Heart left ventricle (tissue), 16 donors: ENCODE measurements at regions of chr7 and their contacts with region 1.

Region 1: GRCh38 chr7:56074371-56074791 is 10.3 kb downstream of the SUMF2 start:
- DNase-seq: peak; percentile 84 to 94 (median 87)
- ATAC-seq: peak; percentile 90 to 95 (median 94)
- H3K4me3 ChIP-seq: no peak overlapping the region
- H3K27ac ChIP-seq: peak overlapping the region in 4 of 12 donors; percentile 4 to 71 (median 51)
- H3K4me1 ChIP-seq: peaks cover 5 to 18% (median 14%) of the 10 kb centered on the region in 12 donors
- H3K27me3 ChIP-seq: no peaks in the 10 kb centered on the region
- CTCF ChIP-seq: peak; percentile 80 to 96 (median 94)
- POLR2A ChIP-seq: peak in 1 of 2 donors; percentile 36

Region 2: GRCh38 chr7:55641273-55641691 is 433.1 kb before region 1 on chr7:
- intact Hi-C with region 1: loop called (anchors 2 to 10 kb)
- DNase-seq: peak in 3 of 5 donors; percentile 27 to 42 (median 30)
- ATAC-seq: peak; percentile 80 to 95 (median 91)
- H3K4me3 ChIP-seq: no peak overlapping the region
- H3K27ac ChIP-seq: no peak overlapping the region
- H3K4me1 ChIP-seq: peaks cover 0 to 7% (median 0%) of the 10 kb centered on the region in 12 donors
- H3K27me3 ChIP-seq: peaks cover 0 to 2% (median 0%) of the 10 kb centered on the region in 9 donors
- CTCF ChIP-seq: peak; percentile 61 to 85 (median 77)
- POLR2A ChIP-seq: no peak

Region 3: DNA sequence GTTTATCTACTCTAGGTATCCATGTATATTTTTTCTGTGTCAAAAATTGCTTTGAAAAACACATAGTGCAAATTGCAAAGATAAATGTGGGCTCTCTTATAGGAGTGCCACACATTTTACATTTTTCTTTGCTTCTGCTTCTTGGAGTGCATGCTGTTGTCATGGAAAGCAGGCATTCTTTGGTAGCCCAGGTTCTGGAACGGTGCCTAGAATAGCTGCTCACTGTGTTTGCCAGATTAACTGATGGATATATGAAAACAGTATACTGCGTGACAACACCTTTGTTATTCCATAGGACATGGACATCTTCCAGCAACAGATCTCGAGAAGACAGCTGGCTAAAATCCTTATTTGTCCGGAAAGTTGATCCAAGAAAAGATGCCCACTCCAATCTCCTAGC is 96.5 kb before region 1 on chr7:
- intact Hi-C with region 1: loop called in 1 of 10 experiments (anchors 10 kb)
- DNase-seq: no peak
- ATAC-seq: no peak
- H3K4me3 ChIP-seq: no peak overlapping the region
- H3K27ac ChIP-seq: peak overlapping the region in 7 of 12 donors; percentile 28 to 84 (median 44)
- H3K4me1 ChIP-seq: peaks cover 0 to 33% (median 12%) of the 10 kb centered on the region in 12 donors
- H3K27me3 ChIP-seq: no peaks in the 10 kb centered on the region
- CTCF ChIP-seq: no peak
- POLR2A ChIP-seq: no peak

Region 4: GRCh38 chr7:55992346-55992745 is 82.0 kb before region 1 on chr7:
- intact Hi-C with region 1: no loop called
- DNase-seq: no peak
- ATAC-seq: no peak
- H3K4me3 ChIP-seq: no peak overlapping the region
- H3K27ac ChIP-seq: no peak overlapping the region
- H3K4me1 ChIP-seq: no peaks in the 10 kb centered on the region
- H3K27me3 ChIP-seq: no peaks in the 10 kb centered on the region
- CTCF ChIP-seq: no peak
- POLR2A ChIP-seq: no peak

Region 5: DNA sequence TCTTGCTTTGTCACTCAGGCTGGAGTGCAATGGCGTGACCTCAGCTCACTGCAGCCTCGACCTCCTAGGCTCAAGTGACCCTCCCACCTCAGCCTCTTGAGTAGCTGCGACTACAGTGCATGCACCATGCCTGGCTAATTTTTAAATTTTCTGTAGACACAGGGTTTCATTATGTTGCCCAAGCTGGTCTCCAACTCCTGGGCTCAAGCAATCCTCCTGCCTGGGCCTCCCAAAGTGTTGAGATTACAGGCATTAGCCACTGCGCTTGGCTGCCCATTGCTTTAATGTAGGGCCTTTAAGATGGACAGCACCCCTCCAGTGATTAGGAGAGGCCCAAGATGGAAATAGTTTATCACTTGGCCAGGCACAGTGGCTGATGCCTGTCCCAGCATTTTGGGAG is 70.6 kb before region 1 on chr7:
- intact Hi-C with region 1: loop called (anchors 1 to 5 kb)
- DNase-seq: no peak
- ATAC-seq: no peak
- H3K4me3 ChIP-seq: no peak overlapping the region
- H3K27ac ChIP-seq: no peak overlapping the region
- H3K4me1 ChIP-seq: peaks cover 0 to 6% (median 0%) of the 10 kb centered on the region in 12 donors
- H3K27me3 ChIP-seq: no peaks in the 10 kb centered on the region
- CTCF ChIP-seq: no peak
- POLR2A ChIP-seq: no peak

Region 6: DNA sequence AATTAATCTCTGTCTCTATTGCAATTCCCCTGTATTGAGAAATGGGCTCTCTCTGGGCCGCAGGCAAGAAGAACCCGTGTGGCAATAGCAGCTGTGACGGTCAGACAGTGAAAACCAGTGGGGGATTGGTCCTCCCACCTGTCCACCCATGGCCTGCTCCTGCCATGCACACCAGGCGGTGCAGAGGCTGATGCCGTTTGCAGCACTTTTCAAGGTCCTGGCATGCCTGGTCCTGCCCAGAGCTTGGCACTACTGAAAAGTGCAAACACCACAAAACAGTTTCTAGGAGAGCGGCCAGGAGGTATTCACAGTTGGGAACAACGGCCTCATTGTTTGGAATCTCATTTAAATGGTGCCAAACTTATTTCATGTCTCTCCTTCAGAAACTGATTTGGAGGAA is 64.7 kb before region 1 on chr7:
- intact Hi-C with region 1: loop called (anchors 1 to 5 kb)
- DNase-seq: peak in 1 of 5 donors; percentile 21
- ATAC-seq: peak; percentile 71 to 83 (median 80)
- H3K4me3 ChIP-seq: no peak overlapping the region
- H3K27ac ChIP-seq: no peak overlapping the region
- H3K4me1 ChIP-seq: peaks cover 0 to 7% (median 0%) of the 10 kb centered on the region in 12 donors
- H3K27me3 ChIP-seq: no peaks in the 10 kb centered on the region
- CTCF ChIP-seq: no peak
- POLR2A ChIP-seq: no peak

Region 7: DNA sequence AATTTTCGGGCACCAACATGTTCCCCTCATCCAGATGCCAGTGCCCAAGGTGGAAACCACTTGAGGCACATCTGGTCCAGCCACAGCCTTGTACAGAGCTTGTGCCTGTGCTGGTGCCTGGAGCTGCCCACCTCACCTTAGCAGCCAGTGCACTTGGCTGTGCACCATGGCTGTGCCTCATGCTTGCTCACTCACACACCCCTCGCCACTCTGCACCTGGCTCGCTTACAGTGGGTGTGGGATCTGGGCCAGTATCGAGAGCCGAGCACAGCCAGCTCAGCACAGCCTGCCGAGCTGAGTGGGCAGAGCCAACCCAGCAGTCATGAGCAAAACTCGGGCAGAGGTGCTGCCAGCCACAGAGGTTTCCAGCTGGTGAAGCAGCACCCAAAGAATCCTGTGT is 181.7 kb after region 1 on chr7:
- intact Hi-C with region 1: no loop called
- DNase-seq: no peak
- ATAC-seq: no peak
- H3K4me3 ChIP-seq: no peak overlapping the region
- H3K27ac ChIP-seq: no peak overlapping the region
- H3K4me1 ChIP-seq: no peaks in the 10 kb centered on the region
- H3K27me3 ChIP-seq: no peaks in the 10 kb centered on the region
- CTCF ChIP-seq: no peak
- POLR2A ChIP-seq: no peak